GM10248 (cell line): ENCODE measurements at regions of chr3 and their contacts with region 1.

Region 1: GRCh38 chr3:160027541-160028195 is 39.0 kb downstream of the IL12A start:
- DNase-seq: peak; percentile 53
- CTCF ChIP-seq: no peak

Region 2: DNA sequence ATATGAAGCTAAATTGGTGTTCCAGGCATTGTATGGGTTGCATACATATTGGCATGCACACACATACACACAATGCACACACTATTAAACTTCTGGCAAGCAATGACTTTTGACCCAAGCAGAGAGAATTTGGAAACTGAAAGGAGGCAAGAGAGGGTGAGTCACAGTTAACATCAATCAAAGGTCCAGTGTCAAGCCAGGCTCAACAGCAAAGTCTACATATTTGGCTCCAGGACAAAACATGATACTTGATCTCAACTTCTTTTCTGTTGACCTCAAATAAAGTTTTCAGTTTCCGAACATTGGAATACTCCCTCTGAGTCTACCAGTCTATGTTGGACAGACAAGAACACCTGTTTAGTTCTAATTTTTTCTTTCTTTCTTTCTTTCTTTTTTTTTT is 10.7 kb before region 1 on chr3:
- CTCF ChIA-PET with region 1: interaction called, 10 read pairs
- POLR2A ChIA-PET with region 1: no interaction called
- DNase-seq: no peak
- CTCF ChIP-seq: no peak

Region 3: DNA sequence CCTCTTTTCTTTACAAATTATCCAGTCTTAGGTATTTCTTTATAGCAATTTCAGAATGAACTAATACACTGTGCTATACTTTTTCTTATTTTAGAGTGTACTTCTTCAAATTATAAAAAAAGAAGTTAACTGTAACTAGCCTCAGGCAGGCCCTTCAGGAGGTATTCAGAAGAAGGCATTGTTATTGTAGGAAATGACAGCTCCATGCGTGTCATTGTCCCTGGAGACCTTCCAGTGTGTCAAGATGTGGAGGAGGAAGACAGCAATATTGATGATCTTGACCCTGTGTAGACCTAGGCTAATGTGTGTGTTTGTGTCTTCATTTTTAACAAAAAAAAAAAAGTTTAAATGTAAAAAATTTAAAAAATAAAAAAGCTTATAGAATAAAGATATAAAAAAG is 16.5 kb after region 1 on chr3:
- CTCF ChIA-PET with region 1: interaction called, 13 read pairs
- POLR2A ChIA-PET with region 1: no interaction called
- DNase-seq: no peak
- CTCF ChIP-seq: no peak

Region 4: GRCh38 chr3:160052385-160053047 is 24.8 kb after region 1 on chr3:
- CTCF ChIA-PET with region 1: interaction called, 13 read pairs
- POLR2A ChIA-PET with region 1: no interaction called
- DNase-seq: no peak
- CTCF ChIP-seq: no peak